ENCODE measurements at regions of chr16 and their contacts with region 1.

Region 1: DNA sequence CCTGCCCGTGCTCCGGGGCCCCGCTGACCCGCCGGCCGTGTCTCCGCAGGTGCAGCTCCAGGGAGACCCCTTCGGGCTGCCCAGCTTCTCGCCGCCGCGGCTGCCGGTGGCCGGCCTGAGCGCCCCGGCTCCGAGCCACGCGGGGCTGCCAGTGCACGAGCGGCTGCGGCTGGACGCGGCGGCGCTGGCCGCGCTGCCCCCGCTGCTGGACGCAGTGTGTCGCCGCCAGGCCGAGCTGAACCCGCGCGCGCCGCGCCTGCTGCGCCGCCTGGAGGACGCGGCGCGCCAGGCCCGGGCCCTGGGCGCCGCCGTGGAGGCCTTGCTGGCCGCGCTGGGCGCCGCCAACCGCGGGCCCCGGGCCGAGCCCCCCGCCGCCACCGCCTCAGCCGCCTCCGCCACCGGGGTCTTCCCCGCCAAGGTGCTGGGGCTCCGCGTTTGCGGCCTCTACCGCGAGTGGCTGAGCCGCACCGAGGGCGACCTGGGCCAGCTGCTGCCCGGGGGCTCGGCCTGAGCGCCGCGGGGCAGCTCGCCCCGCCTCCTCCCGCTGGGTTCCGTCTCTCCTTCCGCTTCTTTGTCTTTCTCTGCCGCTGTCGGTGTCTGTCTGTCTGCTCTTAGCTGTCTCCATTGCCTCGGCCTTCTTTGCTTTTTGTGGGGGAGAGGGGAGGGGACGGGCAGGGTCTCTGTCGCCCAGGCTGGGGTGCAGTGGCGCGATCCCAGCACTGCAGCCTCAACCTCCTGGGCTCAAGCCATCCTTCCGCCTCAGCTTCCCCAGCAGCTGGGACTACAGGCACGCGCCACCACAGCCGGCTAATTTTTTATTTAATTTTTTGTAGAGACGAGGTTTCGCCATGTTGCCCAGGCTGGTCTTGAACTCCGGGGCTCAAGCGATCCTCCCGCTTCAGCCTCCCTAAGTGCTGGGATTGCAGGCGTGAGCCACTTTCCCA is 5.9 kb downstream of the CTF1 start:
- DNase-seq: peak; percentile 50

Region 2: DNA sequence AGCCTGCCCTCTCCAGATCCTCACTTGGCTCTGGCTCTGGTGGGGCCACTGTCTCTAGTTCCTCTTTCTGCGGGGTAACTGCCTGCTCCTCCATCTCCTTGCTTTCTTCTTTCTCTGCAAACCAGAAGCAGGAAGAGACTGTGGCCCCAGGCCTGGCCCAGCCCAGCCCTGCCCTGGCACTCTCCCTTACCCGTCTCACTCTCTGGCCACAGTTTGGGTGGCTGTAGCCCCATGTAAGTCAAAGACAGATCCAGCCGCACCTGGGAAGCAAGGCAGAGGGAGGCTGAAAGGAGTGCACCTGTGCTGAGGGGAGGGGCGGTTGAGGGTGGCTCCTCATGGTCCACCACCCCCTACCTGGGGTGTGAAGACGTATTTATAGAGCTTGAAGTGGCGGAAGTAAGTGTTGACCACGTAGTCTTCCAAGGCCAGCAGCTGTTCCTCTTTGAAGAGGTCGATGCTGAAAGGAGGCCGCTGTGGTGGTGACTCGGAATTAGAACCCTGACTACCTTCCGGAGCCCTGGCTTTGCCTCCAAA is 143.2 kb before region 1 on chr16:
- in situ Hi-C with region 1: loop called (anchors 10 kb)
- DNase-seq: no peak

Region 3: GRCh38 chr16:30820952-30821760 is 81.1 kb before region 1 on chr16:
- in situ Hi-C with region 1: no loop called
- DNase-seq: no peak

Region 4: GRCh38 chr16:30844671-30845449 is 57.4 kb before region 1 on chr16:
- in situ Hi-C with region 1: no loop called
- DNase-seq: peak; percentile 83